ENCODE measurements at regions of chr15 and their contacts with region 1.

Region 1: GRCh38 chr15:31089368-31090047 is 12.0 kb downstream of the TRPM1 start:
- DNase-seq: no peak
- H3K4me3 ChIP-seq: no peak overlapping the region
- H3K27ac ChIP-seq: no peak overlapping the region
- H3K4me1 ChIP-seq: no peaks in the 10 kb centered on the region
- H3K27me3 ChIP-seq: no peaks in the 10 kb centered on the region
- CTCF ChIP-seq: no peak

Region 2: DNA sequence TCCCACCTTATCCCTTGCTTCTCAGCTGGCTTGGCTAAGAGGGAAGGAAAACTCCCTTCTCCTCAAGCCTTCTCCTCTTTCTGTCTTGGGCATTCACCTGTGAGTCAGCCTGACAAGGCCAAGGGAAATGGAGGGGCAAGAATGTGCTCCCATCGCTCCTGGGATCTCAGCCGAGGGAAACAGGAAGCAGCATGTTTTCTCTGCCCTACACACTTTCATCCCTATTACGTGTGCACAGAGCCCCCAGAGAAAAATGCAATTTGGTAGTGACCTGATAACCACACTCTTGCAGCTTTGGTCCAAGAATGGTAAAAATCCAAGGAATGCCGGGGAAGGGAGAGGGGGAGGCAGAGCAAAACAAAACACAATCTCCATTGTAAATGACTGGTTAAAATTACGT is 65.2 kb before region 1 on chr15:
- CTCF ChIA-PET with region 1: no interaction called
- dilution Hi-C with region 1: no loop called
- in situ Hi-C with region 1: no loop called
- intact Hi-C with region 1: no loop called
- DNase-seq: peak; percentile 91
- H3K4me3 ChIP-seq: peak overlapping the region in 1 of 3 experiments; percentile 4
- H3K27ac ChIP-seq: peak overlapping the region; percentile 93
- H3K4me1 ChIP-seq: peaks cover 30% of the 10 kb centered on the region
- H3K27me3 ChIP-seq: no peaks in the 10 kb centered on the region
- CTCF ChIP-seq: no peak

Region 3: GRCh38 chr15:31036783-31037293 is 52.7 kb before region 1 on chr15:
- CTCF ChIA-PET with region 1: no interaction called
- dilution Hi-C with region 1: loop called (anchors 5 kb)
- in situ Hi-C with region 1: no loop called
- intact Hi-C with region 1: no loop called
- DNase-seq: no peak
- H3K4me3 ChIP-seq: no peak overlapping the region
- H3K27ac ChIP-seq: no peak overlapping the region
- H3K4me1 ChIP-seq: no peaks in the 10 kb centered on the region
- H3K27me3 ChIP-seq: no peaks in the 10 kb centered on the region
- CTCF ChIP-seq: no peak

Region 4: GRCh38 chr15:31111091-31111647 is 21.7 kb after region 1 on chr15:
- CTCF ChIA-PET with region 1: no interaction called
- dilution Hi-C with region 1: no loop called
- in situ Hi-C with region 1: no loop called
- intact Hi-C with region 1: no loop called
- DNase-seq: no peak
- H3K4me3 ChIP-seq: no peak overlapping the region
- H3K27ac ChIP-seq: no peak overlapping the region
- H3K4me1 ChIP-seq: no peaks in the 10 kb centered on the region
- H3K27me3 ChIP-seq: no peaks in the 10 kb centered on the region
- CTCF ChIP-seq: no peak

Measured in mammary epithelial cell (primary cell).